ENCODE measurements at regions of chr6 and their contacts with region 1.

Region 1: DNA sequence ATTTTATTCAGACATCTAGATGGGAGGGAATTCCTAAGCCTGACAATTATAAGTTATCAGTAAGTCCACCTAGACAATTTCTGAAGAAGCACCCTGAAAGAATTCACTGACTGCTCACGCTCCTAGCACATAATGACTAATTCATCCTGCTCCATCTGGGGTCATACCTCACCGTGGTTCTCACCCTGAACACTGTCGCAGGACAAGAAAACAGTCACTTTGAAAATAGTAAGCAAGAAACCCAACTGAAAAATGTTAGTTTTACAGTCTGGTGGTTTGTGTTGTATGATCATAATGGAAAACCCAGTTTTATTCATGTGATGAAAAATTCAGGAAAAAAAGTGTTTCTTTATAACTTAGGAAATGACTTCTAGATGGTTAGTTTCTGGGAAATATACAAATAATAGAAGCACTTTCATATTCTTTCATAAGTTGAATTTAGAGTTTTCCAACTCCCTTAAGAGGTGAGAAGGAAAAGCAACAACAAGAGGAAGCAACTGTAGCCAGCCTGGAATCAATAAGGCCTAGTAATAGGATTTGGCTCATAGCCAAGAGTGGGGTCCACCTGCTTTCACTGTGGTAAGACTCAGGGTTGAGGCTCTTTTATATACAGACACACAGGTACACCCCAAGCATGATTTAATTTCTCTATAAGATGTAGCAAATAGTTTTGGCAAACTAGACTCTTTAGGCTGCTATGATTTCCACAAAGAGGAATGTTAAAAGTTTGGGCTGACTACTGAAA is 94.1 kb downstream of the HIVEP2 start:
- DNase-seq: peak; percentile 64
- ATAC-seq: peak; percentile 57
- H3K4me3 ChIP-seq: peak overlapping the region; percentile 26; the same call in 1 of the 2 replicates
- H3K27ac ChIP-seq: peak overlapping the region; percentile 98
- H3K4me1 ChIP-seq: peaks cover 95% of the 10 kb centered on the region
- H3K27me3 ChIP-seq: no peaks in the 10 kb centered on the region
- CTCF ChIP-seq: no peak
- EP300 ChIP-seq: peak; percentile 63 to 64; a peak in 3 of 4 replicates
- POLR2A ChIP-seq: 0 out of 2 replicates have a peak, but pooled peaks have one; percentile 37
- RAD21 ChIP-seq: peak; percentile 46

Region 2: DNA sequence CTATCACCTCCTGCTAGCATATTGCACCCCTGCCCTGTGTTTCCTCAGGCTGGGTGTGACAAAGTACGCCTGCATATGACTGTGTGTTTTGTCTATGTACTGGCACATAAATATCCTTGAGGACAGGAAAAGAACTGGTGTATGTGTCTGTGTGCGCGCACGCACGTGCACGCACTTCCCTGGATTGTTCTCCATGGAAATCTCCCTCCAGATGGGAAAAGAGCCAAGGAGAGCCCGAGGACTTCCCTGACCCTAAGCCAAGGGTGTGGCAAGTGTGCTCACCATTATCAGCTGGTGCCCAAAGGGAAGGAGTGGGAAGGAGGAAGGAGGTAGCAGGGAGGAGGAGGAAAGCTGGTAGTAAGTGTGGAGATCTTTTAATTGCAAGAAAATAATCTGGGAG is 23.5 kb before region 1 on chr6:
- CTCF ChIA-PET with region 1: interaction called, 4 read pairs
- POLR2A ChIA-PET with region 1: interaction called, 67 read pairs
- RAD21 ChIA-PET with region 1: interaction called, 374 read pairs
- SMC1A ChIA-PET with region 1: interaction called, 20 read pairs
- in situ Hi-C with region 1: no loop called
- intact Hi-C with region 1: loop called (anchors 5 kb)
- DNase-seq: no peak
- ATAC-seq: no peak
- H3K4me3 ChIP-seq: no peak overlapping the region
- H3K27ac ChIP-seq: no peak overlapping the region
- H3K4me1 ChIP-seq: peaks cover 10% of the 10 kb centered on the region
- H3K27me3 ChIP-seq: no peaks in the 10 kb centered on the region
- CTCF ChIP-seq: no peak
- EP300 ChIP-seq: no peak
- POLR2A ChIP-seq: no peak
- RAD21 ChIP-seq: no peak

Region 3: GRCh38 chr6:142833054-142833453 is 17.8 kb before region 1 on chr6:
- CTCF ChIA-PET with region 1: interaction called, 4 read pairs
- POLR2A ChIA-PET with region 1: interaction called, 5 read pairs
- RAD21 ChIA-PET with region 1: interaction called, 374 read pairs
- SMC1A ChIA-PET with region 1: interaction called, 20 read pairs
- in situ Hi-C with region 1: no loop called
- intact Hi-C with region 1: no loop called
- DNase-seq: no peak
- ATAC-seq: peak; percentile 50
- H3K4me3 ChIP-seq: no peak overlapping the region
- H3K27ac ChIP-seq: no peak overlapping the region
- H3K4me1 ChIP-seq: 0 out of 2 replicates have a peak, but pooled peaks cover 2% of the 10 kb centered on the region
- H3K27me3 ChIP-seq: no peaks in the 10 kb centered on the region
- CTCF ChIP-seq: no peak
- EP300 ChIP-seq: no peak
- POLR2A ChIP-seq: no peak
- RAD21 ChIP-seq: no peak

Region 4: GRCh38 chr6:142838821-142839685 is 11.8 kb before region 1 on chr6:
- CTCF ChIA-PET with region 1: interaction called, 5 read pairs
- POLR2A ChIA-PET with region 1: interaction called, 19 read pairs
- RAD21 ChIA-PET with region 1: interaction called, 128 read pairs
- SMC1A ChIA-PET with region 1: interaction called, 94 read pairs
- in situ Hi-C with region 1: no loop called
- intact Hi-C with region 1: loop called (anchors 1 kb)
- DNase-seq: no peak
- ATAC-seq: peak; percentile 45
- H3K4me3 ChIP-seq: no peak overlapping the region
- H3K27ac ChIP-seq: peak overlapping the region; percentile 71
- H3K4me1 ChIP-seq: peaks cover 42% of the 10 kb centered on the region
- H3K27me3 ChIP-seq: no peaks in the 10 kb centered on the region
- CTCF ChIP-seq: no peak
- EP300 ChIP-seq: peak; percentile 9 to 65; a peak in 2 of 4 replicates
- POLR2A ChIP-seq: no peak
- RAD21 ChIP-seq: no peak

Region 5: DNA sequence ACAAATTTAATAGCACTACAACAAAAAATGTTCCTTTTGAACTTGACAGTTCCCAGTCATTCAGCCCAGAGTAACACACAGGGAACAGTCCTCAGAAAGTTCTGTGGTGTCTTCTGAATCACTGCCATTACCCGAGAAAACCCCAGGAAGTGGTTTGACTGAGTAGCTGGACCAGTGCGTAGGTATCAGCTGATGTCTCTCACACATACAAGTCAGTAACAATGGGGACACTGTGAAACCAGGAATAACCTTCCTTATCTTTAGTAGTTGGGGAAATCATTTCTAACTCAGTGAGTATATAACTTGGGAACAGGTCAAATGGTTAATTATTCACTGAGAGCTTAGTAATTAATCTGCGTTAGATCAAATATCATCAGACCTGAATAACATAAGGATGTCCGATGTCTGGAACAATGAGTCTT is 21.1 kb after region 1 on chr6:
- CTCF ChIA-PET with region 1: interaction called, 9 read pairs
- POLR2A ChIA-PET with region 1: interaction called, 10 read pairs
- RAD21 ChIA-PET with region 1: interaction called, 21 read pairs
- SMC1A ChIA-PET with region 1: interaction called, 213 read pairs
- in situ Hi-C with region 1: no loop called
- intact Hi-C with region 1: no loop called
- DNase-seq: no peak
- ATAC-seq: peak; percentile 88
- H3K4me3 ChIP-seq: no peak overlapping the region
- H3K27ac ChIP-seq: peak overlapping the region; percentile 50
- H3K4me1 ChIP-seq: peaks cover 35% of the 10 kb centered on the region
- H3K27me3 ChIP-seq: no peaks in the 10 kb centered on the region
- CTCF ChIP-seq: no peak
- EP300 ChIP-seq: peak; percentile 81 to 87
- POLR2A ChIP-seq: no peak
- RAD21 ChIP-seq: no peak; the same call in 1 of the 2 replicates

Region 6: DNA sequence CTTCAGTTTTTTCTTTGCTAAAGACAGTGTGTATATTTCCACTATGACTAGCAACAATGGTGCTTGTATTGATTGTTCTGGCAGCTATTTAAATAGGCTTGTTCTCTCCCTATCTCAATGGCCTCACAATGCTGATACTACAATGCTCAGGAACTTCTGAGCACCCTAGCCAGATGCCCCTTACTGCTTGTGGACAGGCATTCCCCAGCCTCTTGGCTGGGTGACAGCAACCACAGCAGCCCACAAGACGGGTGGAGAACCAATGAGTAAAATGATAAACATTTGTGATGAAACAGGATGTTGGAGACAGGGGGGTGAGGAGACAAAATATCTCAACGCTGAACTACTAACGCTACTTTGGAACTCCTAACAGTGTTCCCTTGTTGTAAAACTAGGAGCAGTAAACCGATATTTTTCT is 51.8 kb after region 1 on chr6:
- CTCF ChIA-PET with region 1: interaction called, 3 read pairs
- POLR2A ChIA-PET with region 1: interaction called, 3 read pairs
- RAD21 ChIA-PET with region 1: interaction called, 7 read pairs
- SMC1A ChIA-PET with region 1: interaction called, 13 read pairs
- in situ Hi-C with region 1: no loop called
- intact Hi-C with region 1: no loop called
- DNase-seq: peak; percentile 67
- ATAC-seq: peak; percentile 79
- H3K4me3 ChIP-seq: no peak overlapping the region
- H3K27ac ChIP-seq: peak overlapping the region; percentile 63
- H3K4me1 ChIP-seq: peaks cover 16% of the 10 kb centered on the region; the same call in 1 of the 2 replicates
- H3K27me3 ChIP-seq: no peaks in the 10 kb centered on the region
- CTCF ChIP-seq: no peak
- EP300 ChIP-seq: peak; percentile 53 to 65; a peak in 2 of 4 replicates
- POLR2A ChIP-seq: no peak
- RAD21 ChIP-seq: no peak

Region 7: DNA sequence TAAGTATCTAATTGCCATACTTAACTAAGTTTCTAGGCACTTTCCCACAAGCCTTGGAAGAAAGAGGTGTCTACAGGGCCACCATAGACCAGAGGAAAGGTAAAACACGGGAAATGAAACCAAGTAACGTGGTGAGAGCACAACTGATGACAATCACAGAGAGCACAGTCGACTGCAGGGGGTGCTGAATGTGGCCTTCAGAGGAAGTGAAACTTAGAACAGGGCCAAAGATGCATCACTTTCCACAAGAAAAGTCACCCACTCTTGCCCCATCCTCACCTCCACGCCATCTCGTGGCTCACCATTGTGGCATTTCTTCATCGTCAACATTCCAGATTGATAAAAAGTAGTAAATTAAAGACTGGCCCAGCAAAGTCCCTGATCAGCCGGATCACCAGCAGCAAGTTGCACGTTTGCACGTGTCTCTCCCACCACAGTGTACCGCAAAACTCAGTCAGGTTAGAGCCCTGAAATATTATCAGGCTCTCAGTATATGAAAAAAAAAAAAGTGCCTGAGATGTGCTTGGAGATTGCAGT is 62.7 kb after region 1 on chr6:
- CTCF ChIA-PET with region 1: no interaction called
- POLR2A ChIA-PET with region 1: interaction called, 4 read pairs
- RAD21 ChIA-PET with region 1: interaction called, 3 read pairs
- SMC1A ChIA-PET with region 1: interaction called, 10 read pairs
- in situ Hi-C with region 1: no loop called
- intact Hi-C with region 1: loop called (anchors 2 kb)
- DNase-seq: peak; percentile 94
- ATAC-seq: peak; percentile 89
- H3K4me3 ChIP-seq: peak overlapping the region; percentile 27
- H3K27ac ChIP-seq: peak overlapping the region; percentile 95
- H3K4me1 ChIP-seq: peaks cover 32% of the 10 kb centered on the region
- H3K27me3 ChIP-seq: no peaks in the 10 kb centered on the region
- CTCF ChIP-seq: peak; percentile 11 to 27 (median 26); a peak in 3 of 6 replicates
- EP300 ChIP-seq: peak; percentile 72 to 97; a peak in 3 of 4 replicates
- POLR2A ChIP-seq: peak; percentile 43; the same call in 1 of the 2 replicates
- RAD21 ChIP-seq: peak; percentile 53